Activated CD8-positive, alpha-beta T cell treated with anti-CD3 and anti-CD28 coated beads, Interleukin-2, amount 10 ng/mL, durations not matched to agents 7 days and 5 days (primary cell): ENCODE measurements at regions of chr10 and their contacts with region 1.

Region 1: GRCh38 chr10:88932539-88933256 is 19.9 kb downstream of the ACTA2 start:
- DNase-seq: peak; percentile 64
- ATAC-seq: peak; percentile 70
- H3K4me3 Mint-ChIP-seq: no peak overlapping the region
- H3K27ac Mint-ChIP-seq: peak overlapping the region; percentile 12
- H3K4me1 Mint-ChIP-seq: peaks cover 26% of the 10 kb centered on the region
- H3K27me3 Mint-ChIP-seq: no peaks in the 10 kb centered on the region

Region 2: GRCh38 chr10:88687853-88688467 is 244.7 kb before region 1 on chr10:
- CTCF ChIA-PET with region 1: interaction called, 28 read pairs
- POLR2A ChIA-PET with region 1: no interaction called
- DNase-seq: no peak
- ATAC-seq: no peak
- H3K4me3 Mint-ChIP-seq: no peak overlapping the region
- H3K27ac Mint-ChIP-seq: no peak overlapping the region
- H3K4me1 Mint-ChIP-seq: no peaks in the 10 kb centered on the region
- H3K27me3 Mint-ChIP-seq: peaks cover 9% of the 10 kb centered on the region

Region 3: GRCh38 chr10:88843171-88843570 is 89.5 kb before region 1 on chr10:
- CTCF ChIA-PET with region 1: interaction called, 281 read pairs
- POLR2A ChIA-PET with region 1: no interaction called
- DNase-seq: no peak
- ATAC-seq: no peak
- H3K4me3 Mint-ChIP-seq: no peak overlapping the region
- H3K27ac Mint-ChIP-seq: no peak overlapping the region
- H3K4me1 Mint-ChIP-seq: peaks cover 18% of the 10 kb centered on the region
- H3K27me3 Mint-ChIP-seq: peaks cover 7% of the 10 kb centered on the region

Region 4: DNA sequence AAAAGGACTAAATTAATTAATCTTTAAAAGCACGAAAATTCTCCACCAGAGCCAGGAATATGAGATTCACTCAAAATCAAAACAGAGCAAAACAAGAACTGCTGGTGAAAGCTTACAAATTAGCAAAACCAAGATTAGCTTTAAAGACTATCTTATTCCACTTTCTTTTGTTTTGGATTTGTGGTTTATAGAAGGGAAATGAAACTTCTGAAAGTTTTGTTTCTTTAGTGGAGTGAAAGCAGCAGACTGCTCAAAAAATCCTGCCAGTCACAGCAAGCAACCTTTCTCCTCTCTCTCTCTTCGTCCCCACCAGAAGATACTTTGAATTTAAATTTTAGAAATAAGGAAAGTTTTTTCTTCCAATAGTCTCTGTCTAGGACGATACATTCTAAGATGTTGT is 12.1 kb after region 1 on chr10:
- CTCF ChIA-PET with region 1: interaction called, 41 read pairs
- POLR2A ChIA-PET with region 1: interaction called, 3 read pairs
- DNase-seq: no peak
- ATAC-seq: no peak
- H3K4me3 Mint-ChIP-seq: no peak overlapping the region
- H3K27ac Mint-ChIP-seq: no peak overlapping the region
- H3K4me1 Mint-ChIP-seq: peaks cover 11% of the 10 kb centered on the region
- H3K27me3 Mint-ChIP-seq: no peaks in the 10 kb centered on the region

Region 5: GRCh38 chr10:89007129-89007893 is 74.6 kb after region 1 on chr10:
- CTCF ChIA-PET with region 1: interaction called, 24 read pairs
- POLR2A ChIA-PET with region 1: no interaction called
- DNase-seq: no peak
- ATAC-seq: no peak
- H3K4me3 Mint-ChIP-seq: no peak overlapping the region
- H3K27ac Mint-ChIP-seq: no peak overlapping the region
- H3K4me1 Mint-ChIP-seq: peaks cover 19% of the 10 kb centered on the region
- H3K27me3 Mint-ChIP-seq: no peaks in the 10 kb centered on the region

Region 6: GRCh38 chr10:89053555-89053954 is 120.9 kb after region 1 on chr10:
- CTCF ChIA-PET with region 1: no interaction called
- POLR2A ChIA-PET with region 1: no interaction called
- DNase-seq: no peak
- ATAC-seq: no peak
- H3K4me3 Mint-ChIP-seq: no peak overlapping the region
- H3K27ac Mint-ChIP-seq: no peak overlapping the region
- H3K4me1 Mint-ChIP-seq: no peaks in the 10 kb centered on the region
- H3K27me3 Mint-ChIP-seq: no peaks in the 10 kb centered on the region

Region 7: GRCh38 chr10:89207181-89207800 is 274.6 kb after region 1 on chr10 and contains the start of gene CH25H:
- CTCF ChIA-PET with region 1: interaction called, 57 read pairs
- POLR2A ChIA-PET with region 1: no interaction called
- DNase-seq: peak; percentile 53
- ATAC-seq: peak; percentile 76
- H3K4me3 Mint-ChIP-seq: peak within 1 kb of the TSS; percentile 65
- H3K27ac Mint-ChIP-seq: peak within 1 kb of the TSS; percentile 32
- H3K4me1 Mint-ChIP-seq: peaks cover 23% of the 10 kb centered on the region
- H3K27me3 Mint-ChIP-seq: peaks cover 38% of the 10 kb centered on the region
- total RNA-seq, gene CH25H: not detected